GM10248 (cell line): ENCODE measurements at regions of chr7 and their contacts with region 1.

Region 1: GRCh38 chr7:24130623-24131022 is 153.4 kb upstream of the NPY start:
- DNase-seq: no peak
- CTCF ChIP-seq: no peak

Region 2: DNA sequence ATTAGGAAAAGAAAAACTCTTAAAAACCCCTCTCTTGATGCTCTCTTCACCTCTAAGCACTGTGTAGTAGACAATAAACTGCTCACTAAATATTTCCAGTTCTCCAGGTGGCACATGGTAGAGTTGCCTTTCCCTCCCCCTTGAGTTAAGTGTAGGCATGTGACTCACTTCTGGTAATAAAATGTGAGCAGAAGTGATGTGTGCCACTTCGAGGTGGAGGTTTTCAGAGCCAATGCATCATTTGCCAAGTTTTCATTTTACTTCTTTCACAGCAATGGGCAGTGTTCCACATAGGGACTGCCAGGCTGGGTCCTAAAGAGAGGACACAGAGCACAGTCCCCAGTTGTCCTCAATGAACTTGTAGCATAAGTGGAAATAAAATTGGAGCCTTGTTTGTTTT is 21.7 kb after region 1 on chr7:
- CTCF ChIA-PET with region 1: interaction called, 12 read pairs
- POLR2A ChIA-PET with region 1: no interaction called
- DNase-seq: no peak
- CTCF ChIP-seq: no peak